Psoas muscle (tissue), 8 donors: ENCODE measurements at regions of chr16 and their contacts with region 1.

Region 1: GRCh38 chr16:27972500-27972899 is 91.0 kb downstream of the GSG1L start:
- DNase-seq: no peak
- ATAC-seq: no peak
- H3K4me3 ChIP-seq: no peak overlapping the region
- H3K27ac ChIP-seq: no peak overlapping the region
- H3K4me1 ChIP-seq: no peaks in the 10 kb centered on the region
- H3K27me3 ChIP-seq: peaks cover 0 to 4% (median 0%) of the 10 kb centered on the region in 3 donors
- CTCF ChIP-seq: peak; percentile 41

Region 2: GRCh38 chr16:28069971-28070794 is 97.7 kb after region 1 on chr16:
- intact Hi-C with region 1: loop called in 1 of 2 experiments (anchors 5 kb)
- DNase-seq: no peak
- ATAC-seq: peak in 2 of 4 donors; percentile 23 to 29
- H3K4me3 ChIP-seq: no peak overlapping the region
- H3K27ac ChIP-seq: no peak overlapping the region
- H3K4me1 ChIP-seq: peaks cover 7% of the 10 kb centered on the region
- H3K27me3 ChIP-seq: no peaks in the 10 kb centered on the region
- CTCF ChIP-seq: no peak